Naive thymus-derived CD4-positive, alpha-beta T cell (primary cell): ENCODE measurements at regions of chr11 and their contacts with region 1.

Region 1: DNA sequence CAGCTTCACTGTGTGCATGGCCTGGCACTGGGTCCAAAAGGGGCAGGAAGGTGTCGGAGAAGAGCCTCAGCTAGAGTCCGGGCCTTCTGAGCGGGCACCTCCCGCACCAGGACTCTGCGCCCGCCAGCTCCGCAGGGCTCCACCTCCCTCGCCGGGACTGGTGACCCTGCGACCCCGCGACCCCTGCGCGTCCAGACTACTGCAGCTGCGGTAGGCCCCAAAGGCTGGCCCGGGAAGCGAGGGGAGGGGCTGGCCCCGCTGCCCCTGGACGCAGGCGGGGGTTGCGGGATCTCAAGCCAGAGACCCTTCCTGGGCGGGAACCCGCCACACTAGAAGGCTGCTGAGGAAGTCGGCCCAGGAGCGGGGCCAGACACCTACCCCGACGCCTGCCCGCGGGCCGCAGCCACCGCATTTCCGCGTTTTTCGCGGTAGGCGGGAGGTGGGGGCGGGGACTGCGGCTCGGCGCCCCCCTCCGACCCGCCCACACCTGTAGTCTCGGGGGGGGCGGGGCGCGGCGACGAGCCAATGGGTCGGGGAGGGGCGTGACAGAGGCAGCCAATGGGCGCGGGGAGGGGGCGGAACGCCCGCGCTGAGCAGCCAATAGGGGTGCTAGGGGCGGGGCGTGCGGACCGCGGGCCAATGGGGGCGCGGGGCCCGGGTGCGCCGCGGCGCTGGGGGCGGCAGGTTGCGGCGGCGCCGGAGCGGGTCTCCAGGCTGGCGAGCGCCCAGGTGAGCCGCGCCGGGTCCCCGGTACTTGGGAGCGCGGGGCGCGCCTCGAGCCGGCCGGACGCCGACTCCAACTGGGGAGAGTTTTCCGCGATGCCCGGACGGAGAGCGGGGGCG is at the starts of genes LMNTD2 and RASSF7:
- DNase-seq: peak; percentile 89 to 98 (median 94)
- ATAC-seq: peak; percentile 98
- H3K4me3 ChIP-seq: peak within 1 kb of the TSS; percentile 68
- H3K4me3 Mint-ChIP-seq: peak within 1 kb of the TSS; percentile 78 to 94 (median 89)
- H3K27ac ChIP-seq: peak within 1 kb of the TSS; percentile 82
- H3K27ac Mint-ChIP-seq: peak within 1 kb of the TSS; percentile 35 to 93 (median 84)
- H3K4me1 ChIP-seq: peaks cover 14 to 17% of the 10 kb centered on the region in 2 donors
- H3K4me1 Mint-ChIP-seq: peaks cover 4 to 17% (median 9%) of the 10 kb centered on the region in 7 donors
- H3K27me3 ChIP-seq: no peaks in the 10 kb centered on the region
- H3K27me3 Mint-ChIP-seq: peaks cover 0 to 18% (median 0%) of the 10 kb centered on the region in 5 donors
- total RNA-seq, gene LMNTD2: 2.8 to 14.7 (median 9.6) TPM
- total RNA-seq, gene RASSF7: 20.0 to 45.4 (median 35.5) TPM

Region 2: GRCh38 chr11:512761-513595 is 47.5 kb before region 1 on chr11:
- CTCF ChIA-PET with region 1: no interaction called
- POLR2A ChIA-PET with region 1: no interaction called
- intact Hi-C with region 1: no loop called
- DNase-seq: no peak
- ATAC-seq: no peak
- H3K4me3 ChIP-seq: no peak overlapping the region
- H3K4me3 Mint-ChIP-seq: no peak overlapping the region
- H3K27ac ChIP-seq: no peak overlapping the region
- H3K27ac Mint-ChIP-seq: peak overlapping the region in 1 of 9 donors; percentile 36
- H3K4me1 ChIP-seq: peaks cover 0 to 2% of the 10 kb centered on the region in 2 donors
- H3K4me1 Mint-ChIP-seq: peaks cover 0 to 10% (median 4%) of the 10 kb centered on the region in 7 donors
- H3K27me3 ChIP-seq: no peaks in the 10 kb centered on the region
- H3K27me3 Mint-ChIP-seq: no peaks in the 10 kb centered on the region

Region 3: DNA sequence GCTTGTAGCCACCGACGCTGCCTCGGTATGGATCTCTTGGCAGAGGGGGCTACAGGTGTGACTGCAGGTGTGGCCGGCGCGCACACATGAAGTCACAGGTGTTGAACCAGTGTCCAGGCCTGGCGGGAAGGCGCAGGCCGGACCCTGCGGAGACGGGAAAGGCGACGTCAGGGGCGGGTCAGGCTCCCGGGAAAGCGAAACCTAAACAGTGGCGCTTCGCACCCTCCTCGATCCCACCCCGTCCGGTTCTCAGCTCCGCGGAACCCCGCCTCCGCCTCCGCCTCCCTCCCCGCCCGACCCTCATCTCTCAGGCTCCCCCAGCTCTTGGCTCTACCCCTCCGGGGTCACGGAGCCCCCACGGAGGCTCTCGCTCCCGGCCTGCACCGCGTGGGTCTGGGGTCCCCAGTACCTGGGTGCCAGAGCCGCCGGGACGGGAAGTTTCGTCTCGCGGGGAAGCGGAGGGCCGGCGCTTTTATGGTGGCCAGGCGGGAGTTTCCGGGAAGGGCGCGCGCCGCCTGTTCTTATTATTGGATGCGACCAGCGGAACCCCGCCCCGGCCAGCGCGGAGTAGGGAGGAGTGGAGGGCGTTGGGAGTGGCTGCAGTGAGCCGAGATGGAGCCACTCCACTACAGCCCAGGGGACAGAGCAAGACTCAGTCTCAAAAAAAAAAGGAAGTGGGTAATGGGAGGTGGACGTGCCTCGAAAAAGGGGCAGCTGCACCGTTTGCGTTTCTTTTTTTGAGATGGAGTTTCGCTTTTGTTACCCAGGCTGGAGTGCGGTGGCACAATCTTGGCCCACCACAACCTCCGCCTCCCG is 55.2 kb after region 1 on chr11 and contains the start of gene IRF7:
- CTCF ChIA-PET with region 1: no interaction called
- POLR2A ChIA-PET with region 1: interaction called, 3 read pairs
- intact Hi-C with region 1: loop called (anchors 1 to 2 kb)
- DNase-seq: peak; percentile 70 to 91 (median 76)
- ATAC-seq: peak; percentile 91
- H3K4me3 ChIP-seq: peak within 1 kb of the TSS; percentile 97
- H3K4me3 Mint-ChIP-seq: peak within 1 kb of the TSS; percentile 80 to 94 (median 92)
- H3K27ac ChIP-seq: peak within 1 kb of the TSS; percentile 95
- H3K27ac Mint-ChIP-seq: peak within 1 kb of the TSS; percentile 83 to 97 (median 93)
- H3K4me1 ChIP-seq: peaks cover 8 to 22% of the 10 kb centered on the region in 2 donors
- H3K4me1 Mint-ChIP-seq: peaks cover 0 to 22% (median 15%) of the 10 kb centered on the region in 7 donors
- H3K27me3 ChIP-seq: no peaks in the 10 kb centered on the region
- H3K27me3 Mint-ChIP-seq: no peaks in the 10 kb centered on the region
- total RNA-seq, gene IRF7: 57.0 to 134 (median 64.6) TPM

Region 4: DNA sequence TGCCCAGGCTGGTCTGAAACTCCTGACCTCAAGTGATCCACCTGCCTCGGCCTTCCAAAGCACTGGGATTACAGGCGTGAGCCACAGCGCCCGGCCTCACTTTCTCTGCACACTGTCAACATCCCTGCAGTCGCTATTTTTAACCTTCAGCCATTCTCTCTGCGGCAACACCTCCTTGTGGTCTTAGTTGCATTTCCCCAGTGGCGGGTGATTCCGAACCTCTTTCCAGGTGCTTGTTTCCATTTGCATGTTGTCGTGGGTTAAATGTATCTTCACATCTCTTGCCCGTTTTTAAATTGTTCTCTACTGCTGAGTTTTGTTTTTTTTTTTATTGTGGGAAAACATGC is 68.7 kb after region 1 on chr11:
- CTCF ChIA-PET with region 1: interaction called, 5 read pairs
- POLR2A ChIA-PET with region 1: no interaction called
- intact Hi-C with region 1: loop called in 1 of 2 experiments (anchors 1 kb)
- DNase-seq: peak in 1 of 9 donors; percentile 17
- ATAC-seq: peak; percentile 48
- H3K4me3 ChIP-seq: no peak overlapping the region
- H3K4me3 Mint-ChIP-seq: peak overlapping the region; percentile 26 to 72 (median 56)
- H3K27ac ChIP-seq: no peak overlapping the region
- H3K27ac Mint-ChIP-seq: peak overlapping the region in 3 of 9 donors; percentile 11 to 34 (median 14)
- H3K4me1 ChIP-seq: peaks cover 0 to 7% of the 10 kb centered on the region in 2 donors
- H3K4me1 Mint-ChIP-seq: peaks cover 17 to 23% (median 20%) of the 10 kb centered on the region in 7 donors
- H3K27me3 ChIP-seq: no peaks in the 10 kb centered on the region
- H3K27me3 Mint-ChIP-seq: peaks cover 21 to 23% (median 22%) of the 10 kb centered on the region in 5 donors